ENCODE measurements at regions of chr6 and their contacts with region 1.

Region 1: GRCh38 chr6:120147157-120147871 is 797.8 kb upstream of the MAN1A1 start:
- DNase-seq: no peak
- ATAC-seq: no peak
- H3K4me3 ChIP-seq: no peak overlapping the region
- H3K4me3 Mint-ChIP-seq: no peak overlapping the region
- H3K27ac ChIP-seq: no peak overlapping the region
- H3K27ac Mint-ChIP-seq: no peak overlapping the region
- H3K4me1 ChIP-seq: no peaks in the 10 kb centered on the region
- H3K4me1 Mint-ChIP-seq: peaks cover 12% of the 10 kb centered on the region
- H3K27me3 ChIP-seq: no peaks in the 10 kb centered on the region
- H3K27me3 Mint-ChIP-seq: no peaks in the 10 kb centered on the region
- CTCF ChIP-seq: no peak

Region 2: GRCh38 chr6:118992186-118992809 is 1155.0 kb before region 1 on chr6:
- CTCF ChIA-PET with region 1: no interaction called
- POLR2A ChIA-PET with region 1: interaction called, 12 read pairs
- intact Hi-C with region 1: no loop called
- DNase-seq: no peak
- ATAC-seq: no peak
- H3K4me3 ChIP-seq: no peak overlapping the region
- H3K4me3 Mint-ChIP-seq: no peak overlapping the region
- H3K27ac ChIP-seq: no peak overlapping the region
- H3K27ac Mint-ChIP-seq: no peak overlapping the region
- H3K4me1 ChIP-seq: no peaks in the 10 kb centered on the region
- H3K4me1 Mint-ChIP-seq: no peaks in the 10 kb centered on the region
- H3K27me3 ChIP-seq: no peaks in the 10 kb centered on the region
- H3K27me3 Mint-ChIP-seq: no peaks in the 10 kb centered on the region
- CTCF ChIP-seq: no peak

Region 3: GRCh38 chr6:120198033-120198432 is 50.7 kb after region 1 on chr6:
- CTCF ChIA-PET with region 1: no interaction called
- POLR2A ChIA-PET with region 1: no interaction called
- intact Hi-C with region 1: no loop called
- DNase-seq: no peak
- ATAC-seq: no peak
- H3K4me3 ChIP-seq: no peak overlapping the region
- H3K4me3 Mint-ChIP-seq: no peak overlapping the region
- H3K27ac ChIP-seq: no peak overlapping the region
- H3K27ac Mint-ChIP-seq: no peak overlapping the region
- H3K4me1 ChIP-seq: no peaks in the 10 kb centered on the region
- H3K4me1 Mint-ChIP-seq: peaks cover 4% of the 10 kb centered on the region
- H3K27me3 ChIP-seq: no peaks in the 10 kb centered on the region
- H3K27me3 Mint-ChIP-seq: no peaks in the 10 kb centered on the region
- CTCF ChIP-seq: no peak